Common myeloid progenitor, CD34-positive (primary cell): ENCODE measurements at regions of chr10 and their contacts with region 1.

Region 1: DNA sequence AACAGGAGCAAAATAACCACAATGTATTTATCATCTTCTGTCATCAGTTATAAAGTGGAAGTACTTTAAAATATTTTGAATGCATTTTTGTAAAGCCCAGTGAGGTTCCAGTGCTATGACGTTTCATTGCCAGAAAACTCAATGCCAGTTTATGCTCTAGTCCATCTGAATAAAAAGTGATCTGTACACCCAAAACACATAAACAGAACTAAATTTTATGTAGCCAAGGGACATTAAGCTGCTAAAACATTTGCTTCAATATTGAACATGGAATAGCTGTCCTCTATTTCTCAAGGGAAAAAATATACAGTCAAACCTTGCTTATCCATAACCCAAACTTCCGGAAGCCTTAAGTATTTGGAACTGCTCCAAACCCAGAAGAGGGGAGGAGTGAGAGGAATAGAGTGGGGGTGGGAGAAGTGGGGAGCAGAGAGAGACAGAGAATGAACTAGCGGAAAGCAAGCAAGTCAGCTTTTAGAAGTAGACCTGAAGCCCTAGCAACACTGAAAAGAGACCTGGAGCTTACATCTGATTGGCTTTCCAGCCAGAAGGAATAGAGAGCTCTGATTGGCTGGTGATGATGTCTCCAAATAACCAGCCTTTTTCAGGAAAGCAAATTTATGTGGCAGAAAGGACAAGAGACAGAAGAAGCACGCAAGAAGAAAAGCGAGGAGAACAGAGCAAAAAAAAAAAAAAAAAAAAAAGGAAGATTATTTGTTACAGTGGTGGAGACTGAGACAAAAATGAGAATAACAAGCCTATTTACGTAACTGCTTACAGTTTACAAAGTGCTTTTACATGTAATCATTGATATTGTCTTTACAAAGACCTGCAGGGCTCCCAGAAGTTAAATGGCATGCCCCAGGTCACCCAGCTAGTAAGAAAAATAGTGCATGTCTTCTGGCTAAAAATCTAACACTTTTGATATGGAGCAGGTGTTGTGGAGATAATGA is 196.0 kb downstream of the RNLS start:
- DNase-seq: peak; percentile 91 to 97 (median 97)
- H3K4me3 ChIP-seq: peak overlapping the region in 5 of 7 experiments; percentile 9 to 63 (median 52)
- H3K27ac ChIP-seq: peak overlapping the region; percentile 99
- H3K4me1 ChIP-seq: peaks cover 52 to 80% (median 70%) of the 10 kb centered on the region in 4 experiments
- H3K27me3 ChIP-seq: no peaks in the 10 kb centered on the region

Region 2: DNA sequence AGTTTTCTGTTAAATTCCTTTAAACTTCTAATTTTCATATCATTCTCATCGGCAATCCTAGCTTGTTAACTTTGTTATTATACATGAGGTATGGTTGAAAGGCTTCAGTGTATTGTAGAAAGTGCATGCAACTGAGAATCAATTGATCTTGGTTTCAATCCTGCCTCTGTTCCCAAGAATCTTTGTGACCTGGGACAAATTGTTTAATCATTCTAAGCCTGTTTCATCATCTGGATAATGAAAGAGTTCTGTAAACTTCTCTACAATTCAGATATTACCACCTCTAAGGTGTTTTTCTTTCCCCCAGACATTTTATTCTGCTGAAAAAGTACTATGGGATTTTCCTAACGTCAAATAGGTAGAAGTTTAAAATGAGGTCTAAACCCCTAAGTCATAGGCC is 17.0 kb after region 1 on chr10:
- CTCF ChIA-PET with region 1: interaction called, 12 read pairs
- POLR2A ChIA-PET with region 1: no interaction called
- DNase-seq: no peak
- H3K4me3 ChIP-seq: no peak overlapping the region
- H3K27ac ChIP-seq: no peak overlapping the region
- H3K4me1 ChIP-seq: peaks cover 0 to 12% (median 4%) of the 10 kb centered on the region in 4 experiments
- H3K27me3 ChIP-seq: no peaks in the 10 kb centered on the region

Region 3: GRCh38 chr10:88456730-88457129 is 69.6 kb after region 1 on chr10:
- CTCF ChIA-PET with region 1: no interaction called
- POLR2A ChIA-PET with region 1: no interaction called
- DNase-seq: peak in 2 of 3 donors; percentile 22 to 34
- H3K4me3 ChIP-seq: no peak overlapping the region
- H3K27ac ChIP-seq: no peak overlapping the region
- H3K4me1 ChIP-seq: peaks cover 0 to 9% (median 6%) of the 10 kb centered on the region in 4 experiments
- H3K27me3 ChIP-seq: no peaks in the 10 kb centered on the region